Colonic mucosa (tissue), 4 donors: ENCODE measurements at regions of chr7 and their contacts with region 1.

Region 1: GRCh38 chr7:131945313-131945911 is 389.0 kb upstream of the PODXL start:
- DNase-seq: peak; percentile 49
- H3K4me3 ChIP-seq: peak overlapping the region; percentile 15
- H3K27ac ChIP-seq: no peak overlapping the region
- H3K4me1 ChIP-seq: peaks cover 7% of the 10 kb centered on the region
- H3K27me3 ChIP-seq: no peaks in the 10 kb centered on the region
- CTCF ChIP-seq: peak; percentile 89

Region 2: DNA sequence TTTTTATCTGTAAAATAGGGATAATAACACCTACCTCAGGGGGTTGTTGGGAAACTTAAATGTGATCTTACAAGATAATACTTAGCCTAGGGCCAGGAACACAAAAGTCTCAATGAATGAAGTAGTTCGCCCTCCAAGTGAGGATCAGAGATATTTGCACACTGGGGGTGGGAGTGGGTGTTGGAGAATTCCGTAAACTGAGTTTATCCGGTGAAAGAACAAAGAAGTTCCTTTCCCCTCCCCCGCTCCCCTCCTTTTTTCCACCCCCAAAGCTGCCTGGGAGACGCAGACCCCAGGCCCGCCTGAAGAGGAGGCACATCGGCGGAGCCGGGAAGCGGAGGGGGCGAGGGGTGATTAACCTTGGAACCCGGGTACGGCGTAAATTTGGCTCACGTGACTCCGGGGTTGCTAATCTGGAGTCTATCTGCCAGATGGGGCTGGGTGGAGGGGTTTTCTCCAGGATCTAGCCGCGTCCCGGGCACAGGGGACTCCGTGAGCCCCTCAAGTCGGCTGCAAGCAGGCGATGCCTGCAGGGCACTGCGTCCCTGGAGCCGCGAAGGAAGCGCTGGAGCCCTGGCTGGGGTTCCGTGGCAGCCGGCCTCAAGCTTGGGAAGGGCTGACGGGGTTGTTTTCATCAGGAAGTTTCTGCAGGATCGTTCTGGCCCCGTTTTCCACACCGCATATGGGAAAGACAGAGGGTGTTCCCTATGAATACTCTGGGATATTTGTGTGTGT is 387.6 kb before region 1 on chr7:
- intact Hi-C with region 1: no loop called
- DNase-seq: peak; percentile 41
- H3K4me3 ChIP-seq: peak overlapping the region; percentile 12
- H3K27ac ChIP-seq: no peak overlapping the region
- H3K4me1 ChIP-seq: peaks cover 7% of the 10 kb centered on the region
- H3K27me3 ChIP-seq: peaks cover 17% of the 10 kb centered on the region
- CTCF ChIP-seq: no peak

Region 3: DNA sequence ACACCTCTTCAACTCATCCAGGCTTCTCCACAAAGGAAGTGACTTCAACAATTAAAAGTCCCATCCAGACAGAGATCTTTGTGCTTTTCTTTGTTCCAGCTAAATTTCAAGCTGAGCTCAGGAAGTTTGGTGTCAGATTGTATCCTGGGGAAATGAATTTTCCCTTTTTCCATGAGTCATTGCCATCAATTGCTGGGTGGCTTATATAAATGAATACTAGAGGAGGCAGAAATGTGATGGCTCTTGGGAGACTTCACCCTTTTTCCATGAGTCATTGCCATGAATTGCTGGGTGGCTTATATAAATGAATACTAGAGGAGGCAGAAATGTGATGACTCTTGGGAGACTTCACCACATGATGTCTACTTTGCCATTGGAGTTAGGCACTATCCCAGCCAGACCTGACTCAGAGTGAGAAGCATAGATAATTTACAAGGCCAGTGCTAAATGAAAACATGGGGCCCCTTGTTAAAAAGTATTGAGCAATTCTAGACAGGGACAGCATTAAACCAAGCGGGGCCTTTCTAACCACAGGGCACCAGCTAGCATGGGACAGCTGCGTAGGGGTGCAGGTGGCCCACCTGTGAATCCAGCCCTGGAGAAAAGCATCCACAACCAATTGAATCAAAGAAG is 49.8 kb before region 1 on chr7:
- intact Hi-C with region 1: no loop called
- DNase-seq: no peak
- H3K4me3 ChIP-seq: no peak overlapping the region
- H3K27ac ChIP-seq: no peak overlapping the region
- H3K4me1 ChIP-seq: no peaks in the 10 kb centered on the region
- H3K27me3 ChIP-seq: no peaks in the 10 kb centered on the region
- CTCF ChIP-seq: no peak

Region 4: DNA sequence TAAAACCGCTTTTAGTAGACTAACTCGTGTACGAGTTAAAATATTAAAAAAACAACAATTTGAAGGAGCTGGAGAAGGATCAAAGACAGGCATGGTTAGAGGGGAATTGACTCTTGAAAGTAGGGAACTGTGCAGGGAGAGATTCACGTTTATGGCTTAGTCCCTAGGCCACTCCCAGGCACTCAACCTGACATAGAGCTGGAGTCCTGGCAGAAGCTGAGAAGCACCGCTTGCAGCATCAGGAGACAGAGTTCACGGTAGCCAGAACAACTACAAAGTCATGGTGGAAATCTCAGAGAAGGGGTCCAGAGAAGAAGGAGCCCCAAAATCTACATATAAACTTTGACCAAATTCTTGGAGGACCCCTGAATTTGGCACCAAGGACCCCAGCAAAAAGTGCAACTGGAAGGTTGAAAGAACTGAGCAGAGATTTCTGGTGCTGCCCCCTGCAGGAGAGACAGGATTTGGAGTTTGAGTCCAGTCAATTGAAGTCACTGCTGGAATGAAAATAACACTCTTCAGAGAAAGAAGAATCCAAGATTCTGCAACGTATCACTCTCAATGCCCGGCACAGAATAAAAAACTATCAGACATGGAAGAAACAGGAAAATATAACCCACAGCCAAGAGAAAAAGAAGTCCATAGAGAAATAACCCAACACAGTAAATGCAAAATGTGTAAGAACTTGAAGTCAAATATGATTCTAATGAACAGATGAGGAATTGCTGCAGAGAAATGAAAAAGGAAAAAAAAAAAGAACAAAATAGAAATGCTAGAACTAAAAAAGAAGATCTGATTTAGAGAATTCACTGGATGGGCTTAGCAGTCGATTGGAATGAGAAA is 104.3 kb after region 1 on chr7:
- intact Hi-C with region 1: loop called (anchors 5 kb)
- DNase-seq: peak; percentile 78
- H3K4me3 ChIP-seq: no peak overlapping the region
- H3K27ac ChIP-seq: no peak overlapping the region
- H3K4me1 ChIP-seq: no peaks in the 10 kb centered on the region
- H3K27me3 ChIP-seq: no peaks in the 10 kb centered on the region
- CTCF ChIP-seq: peak; percentile 46

Region 5: DNA sequence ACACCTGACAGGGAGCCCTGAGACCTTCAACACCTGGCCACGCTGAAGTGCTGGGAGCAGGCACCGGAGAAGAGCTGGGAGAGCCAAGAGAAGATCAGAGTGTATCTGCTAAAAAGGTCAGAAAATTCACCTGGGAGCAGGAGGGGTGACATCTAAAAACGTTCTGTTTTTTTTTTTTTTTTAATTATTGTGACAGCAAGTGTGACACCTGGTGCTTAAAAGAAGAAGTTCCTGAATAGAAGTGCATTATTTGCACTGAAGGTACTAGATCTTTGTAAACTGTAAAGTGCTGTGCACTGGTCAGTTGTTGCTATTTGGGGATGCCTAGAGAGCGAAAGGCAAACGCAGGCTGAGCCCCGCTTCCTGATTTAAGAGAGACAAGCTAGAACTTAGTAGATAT is 208.8 kb after region 1 on chr7:
- intact Hi-C with region 1: loop called (anchors 5 kb)
- DNase-seq: no peak
- H3K4me3 ChIP-seq: no peak overlapping the region
- H3K27ac ChIP-seq: no peak overlapping the region
- H3K4me1 ChIP-seq: no peaks in the 10 kb centered on the region
- H3K27me3 ChIP-seq: no peaks in the 10 kb centered on the region
- CTCF ChIP-seq: no peak

Region 6: DNA sequence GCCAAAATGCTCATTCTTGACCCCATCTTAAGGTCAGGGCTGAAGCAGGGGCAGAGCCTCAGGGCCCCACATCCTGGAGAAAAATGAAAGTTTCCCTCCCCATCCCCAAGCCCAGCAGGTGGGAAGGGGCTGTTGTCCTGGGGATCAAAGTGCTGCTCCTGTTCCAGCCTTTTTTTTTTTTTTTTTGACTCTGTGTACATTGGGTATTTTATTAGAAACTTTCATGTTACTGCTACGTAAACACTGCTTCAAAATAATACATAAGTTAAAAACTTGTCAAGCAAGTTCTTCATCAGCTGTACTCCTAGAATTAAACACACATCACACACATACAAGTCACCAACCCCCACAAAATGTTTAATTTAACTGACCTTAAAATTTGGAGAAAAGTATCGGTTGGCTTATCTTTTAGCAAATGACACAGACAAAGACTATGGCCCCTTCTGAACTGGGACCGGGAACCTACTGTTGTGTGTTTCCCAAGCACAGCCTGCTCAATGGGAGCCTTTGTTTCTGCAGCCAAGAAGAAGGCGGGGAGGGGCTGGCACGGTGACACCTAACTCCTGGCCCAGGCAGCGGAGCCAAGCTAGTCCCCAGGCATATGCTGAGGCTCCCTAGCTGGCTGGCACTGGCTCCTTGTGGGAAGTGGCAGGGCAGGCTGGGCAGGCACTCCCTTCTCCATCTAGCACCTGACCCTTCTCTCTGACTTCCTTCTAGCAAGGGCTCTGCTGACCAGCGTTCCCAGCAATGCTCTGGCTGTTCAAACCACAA is 305.7 kb after region 1 on chr7:
- intact Hi-C with region 1: loop called (anchors 5 kb)
- DNase-seq: peak; percentile 89
- H3K4me3 ChIP-seq: no peak overlapping the region
- H3K27ac ChIP-seq: peak overlapping the region; percentile 71
- H3K4me1 ChIP-seq: peaks cover 8% of the 10 kb centered on the region
- H3K27me3 ChIP-seq: no peaks in the 10 kb centered on the region
- CTCF ChIP-seq: no peak